MCF 10A (cell line): ENCODE measurements at regions of chr6 and their contacts with region 1.

Region 1: GRCh38 chr6:85360794-85361642 is 88.9 kb upstream of the NT5E start:
- DNase-seq: peak; percentile 94
- H3K4me3 Mint-ChIP-seq: no peak overlapping the region
- H3K27ac Mint-ChIP-seq: peak overlapping the region; percentile 93
- H3K4me1 Mint-ChIP-seq: peaks cover 22% of the 10 kb centered on the region
- H3K27me3 Mint-ChIP-seq: no peaks in the 10 kb centered on the region
- CTCF ChIP-seq: no peak

Region 2: GRCh38 chr6:85404502-85405174 is 43.6 kb after region 1 on chr6:
- CTCF ChIA-PET with region 1: interaction called, 3 read pairs
- POLR2A ChIA-PET with region 1: interaction called, 42 read pairs
- intact Hi-C with region 1: loop called (anchors 1 kb)
- DNase-seq: peak; percentile 92
- H3K4me3 Mint-ChIP-seq: peak overlapping the region; percentile 48
- H3K27ac Mint-ChIP-seq: peak overlapping the region; percentile 93
- H3K4me1 Mint-ChIP-seq: peaks cover 49% of the 10 kb centered on the region
- H3K27me3 Mint-ChIP-seq: no peaks in the 10 kb centered on the region
- CTCF ChIP-seq: no peak

Region 3: GRCh38 chr6:85449818-85450759 is 89.1 kb after region 1 on chr6 and contains the start of gene NT5E:
- CTCF ChIA-PET with region 1: interaction called, 11 read pairs
- POLR2A ChIA-PET with region 1: interaction called, 68 read pairs
- intact Hi-C with region 1: loop called (anchors 1 kb)
- DNase-seq: peak; percentile 69
- H3K4me3 Mint-ChIP-seq: peak within 1 kb of the TSS; percentile 88
- H3K27ac Mint-ChIP-seq: peak within 1 kb of the TSS; percentile 92
- H3K4me1 Mint-ChIP-seq: peaks cover 47% of the 10 kb centered on the region
- H3K27me3 Mint-ChIP-seq: no peaks in the 10 kb centered on the region
- CTCF ChIP-seq: no peak
- total RNA-seq, gene NT5E: 112 and 121 TPM in 2 replicates